K562 (cell line): ENCODE measurements at regions of chr15 and their contacts with region 1.

Region 1: GRCh38 chr15:75542386-75542797 is 36.7 kb downstream of the PTPN9 start:
- DNase-seq: peak in 2 of 4 experiments; percentile 62 to 72
- ATAC-seq: peak; percentile 90
- H3K4me3 ChIP-seq: no peak overlapping the region
- H3K27ac ChIP-seq: peak overlapping the region; percentile 36; the same call in 2 of the 3 replicates
- H3K4me1 ChIP-seq: peaks cover 8 to 22% of the 10 kb centered on the region in 2 experiments; a peak in 3 of 5 replicates
- H3K27me3 ChIP-seq: no peaks in the 10 kb centered on the region
- CTCF ChIP-seq: no peak
- EP300 ChIP-seq: peak; percentile 25; the same call in 1 of the 2 replicates
- POLR2A ChIP-seq: no peak
- RAD21 ChIP-seq: no peak

Region 2: DNA sequence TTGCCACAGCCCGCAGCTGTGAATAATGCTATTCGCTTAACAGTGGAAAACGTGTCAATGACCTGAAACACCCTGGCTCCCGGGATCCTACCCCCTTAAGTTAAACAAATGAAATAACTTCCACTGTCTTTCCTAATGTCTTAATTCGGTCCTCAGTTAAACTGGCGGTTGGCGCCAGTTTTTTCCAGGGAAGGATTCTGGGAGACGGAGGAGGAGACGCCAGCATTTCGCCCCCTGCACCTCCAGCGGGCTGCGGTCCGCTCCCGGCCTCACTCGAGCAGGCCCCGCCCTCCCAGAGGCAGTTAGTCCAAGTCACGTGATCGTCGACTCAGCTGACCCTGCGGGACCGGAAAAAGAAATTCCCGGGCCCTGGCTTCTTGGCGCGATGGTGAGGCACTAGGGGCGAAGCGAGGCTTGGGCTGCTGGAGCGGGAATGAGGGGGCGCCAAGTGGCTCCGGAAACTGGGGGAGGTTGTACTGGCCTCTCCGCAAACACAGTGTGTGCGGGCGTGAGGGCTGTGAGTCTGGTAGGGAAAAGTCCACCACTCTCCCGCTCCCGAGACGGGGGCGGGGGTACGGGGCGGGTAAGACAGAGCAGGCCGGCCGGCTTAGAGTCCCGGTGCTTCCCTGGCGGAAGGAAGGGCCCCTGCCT is 206.6 kb before region 1 on chr15 and contains the start of gene COMMD4:
- CTCF ChIA-PET with region 1: no interaction called
- POLR2A ChIA-PET with region 1: no interaction called
- in situ Hi-C with region 1: no loop called
- intact Hi-C with region 1: no loop called
- DNase-seq: peak; percentile 79 to 96 (median 81)
- ATAC-seq: peak; percentile 93
- H3K4me3 ChIP-seq: peak within 1 kb of the TSS; percentile 64
- H3K27ac ChIP-seq: peak within 1 kb of the TSS; percentile 75
- H3K4me1 ChIP-seq: peaks cover 10 to 14% of the 10 kb centered on the region in 2 experiments; a peak in 4 of 5 replicates
- H3K27me3 ChIP-seq: no peaks in the 10 kb centered on the region
- CTCF ChIP-seq: no peak
- EP300 ChIP-seq: peak; percentile 61
- POLR2A ChIP-seq: peak; percentile 85
- RAD21 ChIP-seq: no peak
- polyA plus RNA-seq, gene COMMD4: 20.4 to 39.2 TPM

Region 3: DNA sequence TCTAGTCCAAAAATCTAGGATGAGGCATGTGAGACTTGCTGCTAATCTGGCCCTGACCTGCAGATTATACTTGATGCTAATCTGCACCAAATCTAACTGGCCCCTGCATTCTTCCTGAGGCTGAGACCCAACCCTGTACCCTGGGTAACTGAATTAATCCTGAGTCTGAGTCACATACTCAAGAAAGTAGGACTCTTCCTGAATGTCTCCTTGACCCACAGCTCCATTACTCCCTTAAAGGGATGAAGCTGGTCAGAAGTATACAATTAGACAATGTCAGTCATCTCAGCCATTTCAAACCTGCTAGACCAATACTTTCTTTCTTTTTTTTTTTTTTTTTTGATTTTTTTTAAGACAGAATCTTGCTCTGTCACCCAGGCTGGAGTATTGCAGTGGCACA is 11.3 kb after region 1 on chr15:
- CTCF ChIA-PET with region 1: no interaction called
- POLR2A ChIA-PET with region 1: interaction called, 15 read pairs
- in situ Hi-C with region 1: no loop called
- intact Hi-C with region 1: no loop called
- DNase-seq: no peak
- ATAC-seq: peak; percentile 54
- H3K4me3 ChIP-seq: no peak overlapping the region
- H3K27ac ChIP-seq: no peak overlapping the region
- H3K4me1 ChIP-seq: peaks cover 0 to 9% of the 10 kb centered on the region in 2 experiments; a peak in 3 of 5 replicates
- H3K27me3 ChIP-seq: no peaks in the 10 kb centered on the region
- CTCF ChIP-seq: no peak
- EP300 ChIP-seq: no peak
- POLR2A ChIP-seq: no peak
- RAD21 ChIP-seq: no peak

Region 4: GRCh38 chr15:75561888-75562287 is 19.5 kb after region 1 on chr15:
- CTCF ChIA-PET with region 1: no interaction called
- POLR2A ChIA-PET with region 1: interaction called, 12 read pairs
- in situ Hi-C with region 1: no loop called
- intact Hi-C with region 1: no loop called
- DNase-seq: no peak
- ATAC-seq: no peak
- H3K4me3 ChIP-seq: no peak overlapping the region
- H3K27ac ChIP-seq: no peak overlapping the region
- H3K4me1 ChIP-seq: no peaks in the 10 kb centered on the region; a peak in 2 of 5 replicates
- H3K27me3 ChIP-seq: no peaks in the 10 kb centered on the region
- CTCF ChIP-seq: no peak
- EP300 ChIP-seq: no peak
- POLR2A ChIP-seq: no peak
- RAD21 ChIP-seq: no peak